GM12878 (cell line): ENCODE measurements at regions of chr2 and their contacts with region 1.

Region 1: GRCh38 chr2:6917071-6917760 is at the start of gene RNF144A:
- DNase-seq: no peak
- ATAC-seq: peak; percentile 87
- H3K4me3 ChIP-seq: peak within 1 kb of the TSS; percentile 78
- H3K27ac ChIP-seq: no peak within 1 kb of the TSS
- H3K4me1 ChIP-seq: peaks cover 10% of the 10 kb centered on the region; the same call in 1 of the 2 replicates
- H3K27me3 ChIP-seq: no peaks in the 10 kb centered on the region
- CTCF ChIP-seq: peak in 2 of 3 experiments; percentile 33 to 52; a peak in 3 of 6 replicates
- EP300 ChIP-seq: no peak
- POLR2A ChIP-seq: 0 out of 2 replicates have a peak, but pooled peaks have one; percentile 37
- RAD21 ChIP-seq: 0 out of 2 replicates have a peak, but pooled peaks have one; percentile 25
- polyA plus RNA-seq, gene RNF144A: 0.02 to 0.09 TPM

Region 2: GRCh38 chr2:6929196-6929819 is 12.1 kb after region 1 on chr2:
- CTCF ChIA-PET with region 1: interaction called, 13 read pairs
- POLR2A ChIA-PET with region 1: interaction called, 4 read pairs
- RAD21 ChIA-PET with region 1: interaction called, 3 read pairs
- SMC1A ChIA-PET with region 1: interaction called, 11 read pairs
- in situ Hi-C with region 1: no loop called
- intact Hi-C with region 1: no loop called
- DNase-seq: no peak
- ATAC-seq: no peak
- H3K4me3 ChIP-seq: no peak overlapping the region
- H3K27ac ChIP-seq: no peak overlapping the region
- H3K4me1 ChIP-seq: peaks cover under 1% of the 10 kb centered on the region; the same call in 1 of the 2 replicates
- H3K27me3 ChIP-seq: no peaks in the 10 kb centered on the region
- CTCF ChIP-seq: no peak
- EP300 ChIP-seq: no peak
- POLR2A ChIP-seq: no peak
- RAD21 ChIP-seq: no peak

Region 3: GRCh38 chr2:6934758-6935651 is 17.8 kb after region 1 on chr2:
- CTCF ChIA-PET with region 1: interaction called, 13 read pairs
- POLR2A ChIA-PET with region 1: interaction called, 4 read pairs
- RAD21 ChIA-PET with region 1: interaction called, 3 read pairs
- SMC1A ChIA-PET with region 1: interaction called, 11 read pairs
- in situ Hi-C with region 1: no loop called
- intact Hi-C with region 1: no loop called
- DNase-seq: no peak
- ATAC-seq: no peak
- H3K4me3 ChIP-seq: no peak overlapping the region
- H3K27ac ChIP-seq: no peak overlapping the region
- H3K4me1 ChIP-seq: peaks cover 9% of the 10 kb centered on the region; the same call in 1 of the 2 replicates
- H3K27me3 ChIP-seq: no peaks in the 10 kb centered on the region
- CTCF ChIP-seq: no peak
- EP300 ChIP-seq: no peak
- POLR2A ChIP-seq: no peak
- RAD21 ChIP-seq: no peak

Region 4: GRCh38 chr2:6945087-6945813 is 28.0 kb after region 1 on chr2:
- CTCF ChIA-PET with region 1: interaction called, 25 read pairs
- POLR2A ChIA-PET with region 1: interaction called, 3 read pairs
- RAD21 ChIA-PET with region 1: interaction called, 4 read pairs
- SMC1A ChIA-PET with region 1: interaction called, 10 read pairs
- in situ Hi-C with region 1: no loop called
- intact Hi-C with region 1: no loop called
- DNase-seq: peak; percentile 72
- ATAC-seq: peak; percentile 94
- H3K4me3 ChIP-seq: no peak overlapping the region
- H3K27ac ChIP-seq: 0 out of 2 replicates have a peak overlapping the region, but pooled peaks have one; percentile 6
- H3K4me1 ChIP-seq: peaks cover 25% of the 10 kb centered on the region
- H3K27me3 ChIP-seq: no peaks in the 10 kb centered on the region
- CTCF ChIP-seq: no peak
- EP300 ChIP-seq: peak; percentile 55; a peak in 2 of 4 replicates
- POLR2A ChIP-seq: no peak
- RAD21 ChIP-seq: no peak

Region 5: DNA sequence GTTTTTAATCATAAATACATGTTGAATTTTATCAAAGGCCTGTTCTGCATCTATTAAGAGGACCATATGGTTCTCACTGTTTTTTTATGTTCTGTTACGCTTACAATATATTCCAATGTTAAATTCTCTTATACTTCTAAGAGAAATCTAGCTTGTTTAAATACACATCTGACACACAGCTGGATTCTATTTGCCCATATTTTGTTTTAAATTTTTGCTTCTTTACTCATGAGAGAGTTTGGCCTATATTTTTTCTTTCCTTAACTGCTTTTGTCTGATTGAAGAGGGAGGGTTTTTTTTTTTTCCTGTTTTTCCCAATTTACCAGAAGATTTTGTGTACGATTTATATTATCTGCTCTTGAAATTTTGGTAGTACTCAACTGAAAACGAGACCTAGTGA is 34.9 kb after region 1 on chr2:
- CTCF ChIA-PET with region 1: interaction called, 25 read pairs
- POLR2A ChIA-PET with region 1: interaction called, 3 read pairs
- RAD21 ChIA-PET with region 1: interaction called, 4 read pairs
- SMC1A ChIA-PET with region 1: interaction called, 5 read pairs
- in situ Hi-C with region 1: no loop called
- intact Hi-C with region 1: no loop called
- DNase-seq: no peak
- ATAC-seq: no peak
- H3K4me3 ChIP-seq: no peak overlapping the region
- H3K27ac ChIP-seq: no peak overlapping the region
- H3K4me1 ChIP-seq: 0 out of 2 replicates have a peak, but pooled peaks cover 3% of the 10 kb centered on the region
- H3K27me3 ChIP-seq: no peaks in the 10 kb centered on the region
- CTCF ChIP-seq: no peak
- EP300 ChIP-seq: no peak
- POLR2A ChIP-seq: no peak
- RAD21 ChIP-seq: no peak

Region 6: GRCh38 chr2:7014174-7014640 is 97.0 kb after region 1 on chr2:
- CTCF ChIA-PET with region 1: interaction called, 29 read pairs
- POLR2A ChIA-PET with region 1: interaction called, 3 read pairs
- RAD21 ChIA-PET with region 1: interaction called, 15 read pairs
- SMC1A ChIA-PET with region 1: interaction called, 14 read pairs
- in situ Hi-C with region 1: no loop called
- intact Hi-C with region 1: no loop called
- DNase-seq: no peak
- ATAC-seq: peak; percentile 86
- H3K4me3 ChIP-seq: no peak overlapping the region
- H3K27ac ChIP-seq: no peak overlapping the region
- H3K4me1 ChIP-seq: no peaks in the 10 kb centered on the region
- H3K27me3 ChIP-seq: no peaks in the 10 kb centered on the region; a peak in 1 of 4 replicates
- CTCF ChIP-seq: peak; percentile 37 to 61 (median 58); a peak in 5 of 6 replicates
- EP300 ChIP-seq: no peak
- POLR2A ChIP-seq: no peak
- RAD21 ChIP-seq: peak; percentile 42

Region 7: DNA sequence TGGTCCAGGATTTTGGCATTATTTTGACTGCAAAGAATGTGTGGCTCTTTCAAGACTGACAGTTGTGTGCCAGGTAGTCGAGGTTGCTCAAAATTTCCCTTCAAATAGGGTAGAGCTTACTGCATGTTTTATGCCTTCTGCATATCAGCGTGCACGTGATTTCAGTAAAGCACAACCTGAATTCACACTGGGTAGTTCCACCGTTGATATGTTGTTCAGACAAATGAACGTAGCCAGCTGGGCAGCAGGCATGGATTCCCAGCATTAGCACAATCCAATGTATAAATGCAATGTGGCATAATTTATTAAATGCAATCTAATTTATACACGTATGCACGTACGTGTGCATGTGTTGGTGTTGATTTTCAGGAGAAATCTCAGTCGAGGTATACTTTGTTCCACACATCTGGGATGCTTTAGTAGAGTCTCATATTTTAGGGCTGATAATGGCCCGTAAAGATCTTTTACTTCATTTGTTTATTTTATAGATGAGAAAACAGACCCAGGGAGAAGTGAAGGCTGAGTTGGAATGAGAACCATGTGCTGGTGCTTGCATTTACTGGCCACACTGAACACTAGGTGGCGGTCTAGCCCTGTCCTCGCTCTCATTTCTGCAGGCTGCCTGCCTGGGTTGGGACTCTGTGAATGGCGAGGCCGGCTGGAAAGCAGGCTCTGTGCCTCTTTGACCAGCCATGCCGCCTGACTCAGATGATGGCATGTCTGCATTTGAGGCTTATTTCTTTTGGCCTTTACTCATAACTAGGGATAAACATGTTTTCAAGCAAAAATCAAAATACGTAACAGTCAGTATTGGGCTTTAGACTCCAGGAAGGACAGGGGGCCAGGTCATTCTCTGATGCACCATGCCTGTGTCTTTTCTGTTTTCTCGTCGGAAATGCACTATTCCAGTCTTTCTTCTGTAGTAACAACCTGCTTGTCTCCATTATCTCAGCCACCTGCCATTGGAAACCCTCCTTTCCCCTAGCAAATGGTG is 120.4 kb after region 1 on chr2:
- CTCF ChIA-PET with region 1: interaction called, 25 read pairs
- POLR2A ChIA-PET with region 1: no interaction called
- RAD21 ChIA-PET with region 1: interaction called, 3 read pairs
- SMC1A ChIA-PET with region 1: interaction called, 3 read pairs
- in situ Hi-C with region 1: no loop called
- intact Hi-C with region 1: no loop called
- DNase-seq: no peak
- ATAC-seq: peak; percentile 99
- H3K4me3 ChIP-seq: no peak overlapping the region
- H3K27ac ChIP-seq: no peak overlapping the region
- H3K4me1 ChIP-seq: no peaks in the 10 kb centered on the region
- H3K27me3 ChIP-seq: no peaks in the 10 kb centered on the region
- CTCF ChIP-seq: peak; percentile 78 to 81 (median 79)
- EP300 ChIP-seq: no peak
- POLR2A ChIP-seq: no peak
- RAD21 ChIP-seq: peak; percentile 64

Region 8: GRCh38 chr2:7242189-7242867 is 325.1 kb after region 1 on chr2:
- CTCF ChIA-PET with region 1: no interaction called
- POLR2A ChIA-PET with region 1: no interaction called
- RAD21 ChIA-PET with region 1: no interaction called
- SMC1A ChIA-PET with region 1: no interaction called
- in situ Hi-C with region 1: no loop called
- intact Hi-C with region 1: no loop called
- DNase-seq: peak; percentile 9
- ATAC-seq: peak; percentile 65
- H3K4me3 ChIP-seq: no peak overlapping the region
- H3K27ac ChIP-seq: no peak overlapping the region
- H3K4me1 ChIP-seq: no peaks in the 10 kb centered on the region
- H3K27me3 ChIP-seq: no peaks in the 10 kb centered on the region
- CTCF ChIP-seq: no peak
- EP300 ChIP-seq: no peak
- POLR2A ChIP-seq: no peak
- RAD21 ChIP-seq: no peak